ENCODE measurements at regions of chr6 and their contacts with region 1.

Region 1: GRCh38 chr6:30483677-30484279 is 5.5 kb upstream of the HLA-E start:
- DNase-seq: no peak
- H3K4me3 ChIP-seq: no peak overlapping the region
- H3K27ac ChIP-seq: no peak overlapping the region
- H3K4me1 ChIP-seq: peaks cover 0 to 6% of the 10 kb centered on the region in 2 donors
- H3K27me3 ChIP-seq: no peaks in the 10 kb centered on the region
- CTCF ChIP-seq: peak; percentile 33 to 56 (median 49)

Region 2: GRCh38 chr6:30533460-30534294 is 49.9 kb after region 1 on chr6:
- intact Hi-C with region 1: loop called (anchors 1 kb)
- DNase-seq: peak in 1 of 2 donors; percentile 33
- H3K4me3 ChIP-seq: no peak overlapping the region
- H3K27ac ChIP-seq: no peak overlapping the region
- H3K4me1 ChIP-seq: no peaks in the 10 kb centered on the region
- H3K27me3 ChIP-seq: no peaks in the 10 kb centered on the region
- CTCF ChIP-seq: no peak

Measured in ascending aorta (tissue), 2 donors.